Activated T-helper 2 cell treated with anti-CD3 and anti-CD28 coated beads, Interferon-gamma antibody, Interleukin-2, Interleukin-4, amounts not matched to agents 10 μg/mL and 5 μg/mL and 100 μg/mL, durations not matched to agents 14 hours and 24 hours and 36 hours (primary cell): ENCODE measurements at regions of chr2 and their contacts with region 1.

Region 1: DNA sequence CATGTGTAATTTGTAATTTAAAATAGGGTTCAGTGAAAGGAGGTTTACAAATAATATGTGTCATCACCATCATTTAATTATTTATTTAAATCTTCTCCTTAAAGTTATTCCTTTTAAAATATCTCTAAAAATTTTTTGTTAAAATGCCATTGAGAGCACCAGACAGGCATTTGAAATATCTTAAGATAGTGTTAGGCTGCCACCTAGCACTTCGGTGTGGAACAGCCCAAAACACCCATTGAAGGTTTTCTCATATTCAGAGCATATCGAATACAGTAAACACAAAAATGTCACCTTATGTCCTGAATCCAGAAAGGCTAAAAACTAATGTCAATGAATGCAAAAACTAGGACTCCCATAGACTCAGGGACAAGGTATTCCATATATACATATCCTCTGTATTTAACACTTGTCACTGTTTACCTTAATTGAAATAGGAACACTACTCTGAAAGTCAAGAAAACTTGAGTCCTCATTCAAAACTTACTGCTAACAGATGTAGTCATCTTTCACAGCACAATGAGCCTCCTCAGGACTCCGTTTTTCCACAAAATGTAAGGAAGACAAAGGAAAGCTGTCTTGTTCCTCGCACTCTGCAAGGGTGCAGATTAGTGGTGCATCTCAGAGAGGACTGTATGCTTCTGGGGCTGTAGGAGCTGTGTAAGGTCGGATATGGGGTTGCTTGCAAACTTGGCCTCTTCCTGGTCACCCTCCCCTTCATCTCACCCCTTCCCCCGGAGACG is 329.5 kb downstream of the PAX3 start:
- DNase-seq: no peak
- H3K4me3 Mint-ChIP-seq: no peak overlapping the region
- H3K27ac Mint-ChIP-seq: no peak overlapping the region
- H3K4me1 Mint-ChIP-seq: no peaks in the 10 kb centered on the region
- H3K27me3 Mint-ChIP-seq: no peaks in the 10 kb centered on the region

Region 2: DNA sequence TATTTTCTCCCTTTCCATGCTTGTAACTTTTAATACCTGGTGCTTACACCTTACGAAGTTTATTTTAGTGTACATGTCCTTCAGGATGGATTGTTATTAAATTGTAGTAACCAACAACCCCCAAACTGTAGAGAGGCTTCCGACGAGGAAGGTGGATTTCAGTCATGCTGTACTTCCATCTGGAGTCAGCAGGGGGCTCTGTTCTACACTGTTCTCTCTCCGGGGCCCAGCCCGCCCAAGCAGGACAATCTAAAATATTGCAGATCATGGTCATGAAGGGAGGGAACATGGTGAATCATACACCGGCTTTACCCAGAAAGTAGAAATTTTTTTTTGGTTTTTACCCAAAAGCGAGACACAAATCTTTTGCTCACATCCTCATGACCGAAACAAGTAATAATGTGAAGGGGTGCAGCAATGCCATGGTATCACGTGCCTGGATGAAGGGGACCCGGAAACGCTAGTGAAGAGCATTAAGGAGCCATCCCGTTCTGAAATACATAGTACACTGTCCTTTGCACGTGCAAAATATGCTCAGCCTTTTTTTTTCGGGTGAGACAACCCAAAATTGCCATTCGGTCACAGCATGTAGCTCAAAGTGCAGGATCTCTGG is 1281.9 kb before region 1 on chr2:
- intact Hi-C with region 1: loop called (anchors 10 kb)
- DNase-seq: peak; percentile 30
- H3K4me3 Mint-ChIP-seq: no peak overlapping the region
- H3K27ac Mint-ChIP-seq: no peak overlapping the region
- H3K4me1 Mint-ChIP-seq: peaks cover 1% of the 10 kb centered on the region
- H3K27me3 Mint-ChIP-seq: peaks cover 2% of the 10 kb centered on the region